GM10248 (cell line): ENCODE measurements at regions of chr5 and their contacts with region 1.

Region 1: DNA sequence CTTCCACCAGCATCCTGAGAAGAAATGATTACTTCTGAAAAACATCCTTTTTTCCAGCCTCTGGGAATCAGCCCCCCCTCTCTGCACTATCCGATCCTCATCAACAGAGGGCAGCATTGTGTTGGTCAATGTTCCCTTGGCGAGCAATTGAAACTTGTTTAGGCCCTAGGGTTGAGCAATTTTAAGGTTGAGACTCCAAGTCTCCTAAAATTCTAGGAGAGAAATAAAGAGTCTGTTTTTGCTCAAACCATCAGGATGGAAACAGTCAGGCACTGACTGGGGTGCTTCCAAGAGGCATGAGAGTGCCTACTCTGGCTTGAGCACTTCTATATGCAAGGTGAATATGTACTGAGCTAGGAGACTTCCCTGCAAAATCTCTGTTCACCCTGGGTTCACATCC is 12.4 kb upstream of the CYFIP2 start:
- DNase-seq: peak; percentile 59
- CTCF ChIP-seq: peak; percentile 94

Region 2: GRCh38 chr5:156971415-156971814 is 282.1 kb before region 1 on chr5:
- CTCF ChIA-PET with region 1: no interaction called
- POLR2A ChIA-PET with region 1: no interaction called
- DNase-seq: no peak
- CTCF ChIP-seq: no peak

Region 3: DNA sequence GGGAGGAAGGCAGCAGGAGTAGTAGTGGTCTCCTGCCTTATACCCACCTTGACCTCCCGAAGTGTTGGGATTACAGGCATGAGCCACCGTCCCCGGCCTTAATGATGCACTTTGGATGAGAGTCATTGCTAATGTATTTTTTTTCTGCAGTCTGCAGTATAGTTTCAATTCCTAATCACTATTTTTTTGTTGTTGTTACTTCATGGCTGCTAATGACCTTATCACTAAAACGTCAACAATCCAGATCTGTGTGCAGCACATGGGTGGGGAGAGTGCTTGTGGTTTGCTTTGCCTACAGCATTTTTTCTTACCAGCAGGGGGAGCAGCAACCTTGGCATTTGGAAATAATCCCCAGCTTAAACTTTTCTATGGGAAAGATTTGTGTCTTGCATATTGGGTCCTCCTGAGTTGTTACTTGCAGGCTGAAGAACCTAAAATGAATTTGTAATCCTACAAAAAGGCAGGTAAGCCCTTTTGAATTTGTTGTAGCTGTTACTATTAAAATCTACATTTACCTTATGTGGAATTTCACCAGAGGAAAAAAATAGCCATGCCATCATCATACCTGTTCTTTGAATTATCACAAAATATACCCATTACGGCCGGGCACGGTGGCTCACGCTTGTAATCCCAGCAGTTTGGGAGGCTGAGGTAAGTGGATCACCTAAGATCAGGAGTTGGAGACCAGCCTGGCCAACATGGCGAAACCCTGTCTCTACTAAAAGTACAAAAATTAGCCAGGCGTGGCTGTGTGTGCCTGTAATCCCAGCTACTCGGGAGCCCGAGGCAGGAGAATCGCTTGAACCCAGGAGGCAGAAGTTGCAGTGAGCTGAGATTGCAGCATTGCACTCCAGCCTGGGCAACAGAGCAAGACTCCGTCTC is 104.6 kb before region 1 on chr5:
- CTCF ChIA-PET with region 1: interaction called, 45 read pairs
- POLR2A ChIA-PET with region 1: no interaction called
- DNase-seq: peak; percentile 71
- CTCF ChIP-seq: peak; percentile 77

Region 4: GRCh38 chr5:157189223-157189622 is 64.3 kb before region 1 on chr5:
- CTCF ChIA-PET with region 1: interaction called, 10 read pairs
- POLR2A ChIA-PET with region 1: no interaction called
- DNase-seq: no peak
- CTCF ChIP-seq: no peak

Region 5: GRCh38 chr5:157265714-157266285 is 12.3 kb after region 1 on chr5 and contains the start of gene CYFIP2:
- CTCF ChIA-PET with region 1: interaction called, 101 read pairs
- POLR2A ChIA-PET with region 1: interaction called, 3 read pairs
- DNase-seq: peak; percentile 91
- CTCF ChIP-seq: no peak

Region 6: GRCh38 chr5:157290981-157291711 is 37.6 kb after region 1 on chr5:
- CTCF ChIA-PET with region 1: interaction called, 35 read pairs
- POLR2A ChIA-PET with region 1: no interaction called
- DNase-seq: peak; percentile 51
- CTCF ChIP-seq: no peak

Region 7: GRCh38 chr5:157312492-157312891 is 58.9 kb after region 1 on chr5:
- CTCF ChIA-PET with region 1: interaction called, 65 read pairs
- POLR2A ChIA-PET with region 1: no interaction called
- DNase-seq: peak; percentile 84
- CTCF ChIP-seq: peak; percentile 83

Region 8: GRCh38 chr5:157471709-157472108 is 218.2 kb after region 1 on chr5:
- CTCF ChIA-PET with region 1: interaction called, 13 read pairs
- POLR2A ChIA-PET with region 1: no interaction called
- DNase-seq: peak; percentile 54
- CTCF ChIP-seq: peak; percentile 67